Activated B cell treated with CpG ODN at 0.5 μM for 24 hours (primary cell): ENCODE measurements at regions of chr16 and their contacts with region 1.

Region 1: GRCh38 chr16:89657442-89658220 is at the starts of genes CHMP1A and SPATA33:
- DNase-seq: peak; percentile 96
- ATAC-seq: peak; percentile 91
- H3K4me3 Mint-ChIP-seq: peak within 1 kb of the TSS; percentile 85
- H3K27ac Mint-ChIP-seq: peak within 1 kb of the TSS; percentile 75
- H3K4me1 Mint-ChIP-seq: peaks cover 33% of the 10 kb centered on the region
- H3K27me3 Mint-ChIP-seq: no peaks in the 10 kb centered on the region
- CTCF ChIP-seq: no peak
- total RNA-seq, gene CHMP1A: 89.8 and 98.7 TPM in 2 replicates
- total RNA-seq, gene SPATA33: 8.5 TPM in 2 replicates

Region 2: GRCh38 chr16:89678258-89678657 is 20.6 kb after region 1 on chr16:
- CTCF ChIA-PET with region 1: no interaction called
- POLR2A ChIA-PET with region 1: interaction called, 10 read pairs
- intact Hi-C with region 1: no loop called
- DNase-seq: no peak
- ATAC-seq: no peak
- H3K4me3 Mint-ChIP-seq: no peak overlapping the region
- H3K27ac Mint-ChIP-seq: no peak overlapping the region
- H3K4me1 Mint-ChIP-seq: no peaks in the 10 kb centered on the region
- H3K27me3 Mint-ChIP-seq: no peaks in the 10 kb centered on the region
- CTCF ChIP-seq: no peak

Region 3: GRCh38 chr16:89686520-89687091 is 29.0 kb after region 1 on chr16 and contains the start of gene CDK10:
- CTCF ChIA-PET with region 1: interaction called, 3 read pairs
- POLR2A ChIA-PET with region 1: interaction called, 14 read pairs
- intact Hi-C with region 1: loop called (anchors 1 kb)
- DNase-seq: peak; percentile 98
- ATAC-seq: peak; percentile 91
- H3K4me3 Mint-ChIP-seq: peak within 1 kb of the TSS; percentile 93
- H3K27ac Mint-ChIP-seq: peak within 1 kb of the TSS; percentile 90
- H3K4me1 Mint-ChIP-seq: peaks cover 18% of the 10 kb centered on the region
- H3K27me3 Mint-ChIP-seq: no peaks in the 10 kb centered on the region
- CTCF ChIP-seq: no peak
- total RNA-seq, gene CDK10: 67.9 and 76.1 TPM in 2 replicates

Region 4: DNA sequence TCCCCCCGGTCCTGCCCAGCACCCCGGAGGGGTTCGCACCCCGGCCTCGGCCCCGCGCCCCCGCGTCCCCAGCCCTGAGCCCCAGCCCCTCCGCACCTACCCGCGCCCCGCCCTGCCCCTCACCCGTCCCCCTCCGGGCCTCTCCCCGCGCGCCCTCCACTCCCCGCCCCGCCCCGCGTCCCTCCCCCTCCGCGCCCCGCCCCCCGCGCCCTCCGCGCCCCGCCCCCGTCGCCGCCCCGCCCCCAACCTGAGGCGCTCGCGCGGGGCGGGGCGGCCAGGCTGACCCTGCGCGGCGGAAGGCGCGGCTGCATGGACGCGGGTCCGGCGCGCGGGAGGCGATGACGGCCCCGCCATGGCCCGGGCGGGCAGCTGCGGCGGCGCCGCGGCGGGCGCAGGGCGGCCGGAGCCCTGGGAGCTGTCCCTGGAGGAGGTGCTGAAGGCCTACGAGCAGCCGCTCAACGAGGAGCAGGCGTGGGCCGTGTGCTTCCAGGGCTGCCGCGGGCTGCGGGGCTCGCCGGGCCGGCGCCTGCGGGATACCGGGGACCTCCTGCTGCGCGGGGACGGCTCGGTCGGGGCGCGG is 170.7 kb after region 1 on chr16 and contains the start of gene SPIRE2:
- CTCF ChIA-PET with region 1: no interaction called
- POLR2A ChIA-PET with region 1: no interaction called
- intact Hi-C with region 1: loop called (anchors 1 kb)
- DNase-seq: peak; percentile 71
- ATAC-seq: peak; percentile 98
- H3K4me3 Mint-ChIP-seq: peak within 1 kb of the TSS; percentile 52
- H3K27ac Mint-ChIP-seq: no peak within 1 kb of the TSS
- H3K4me1 Mint-ChIP-seq: peaks cover 4% of the 10 kb centered on the region
- H3K27me3 Mint-ChIP-seq: peaks cover 26% of the 10 kb centered on the region
- CTCF ChIP-seq: no peak
- total RNA-seq, gene SPIRE2: 0.46 and 1.2 TPM in 2 replicates